ENCODE measurements at regions of chr2 and their contacts with region 1.

Region 1: DNA sequence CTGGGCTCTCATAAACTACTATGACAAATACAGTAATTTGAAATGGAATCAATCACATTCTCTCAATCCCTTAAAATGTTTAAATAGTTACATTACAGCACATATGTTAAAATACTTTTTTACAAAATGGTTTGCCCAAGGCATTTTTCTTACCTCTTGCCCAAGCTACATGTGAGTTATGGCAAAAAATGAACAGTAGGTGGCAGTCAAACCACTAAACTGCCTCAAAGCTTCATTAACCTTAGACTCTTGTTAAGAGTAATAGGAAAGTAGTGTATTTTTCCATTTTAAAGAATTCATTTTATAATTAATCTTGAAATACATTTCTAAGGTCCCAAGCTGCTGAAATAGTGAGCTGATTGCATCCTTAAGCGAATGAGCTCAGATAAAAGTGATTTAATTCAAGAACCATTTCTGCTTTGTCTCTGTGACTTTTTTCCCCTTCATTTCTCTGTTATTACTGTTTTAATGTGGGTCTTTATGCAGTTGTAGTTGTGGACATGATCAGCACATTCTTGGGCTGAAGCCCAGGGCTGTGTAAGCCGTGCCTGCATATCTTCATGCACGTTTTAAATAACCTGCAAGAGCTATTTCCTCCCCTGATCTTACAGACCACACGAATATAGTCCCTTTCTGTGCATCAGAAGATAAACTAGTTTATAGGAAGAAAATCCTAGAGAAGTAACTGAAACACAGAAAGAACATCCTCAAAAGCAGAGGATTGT is 311.8 kb downstream of the LNPK start:
- DNase-seq: no peak

Region 2: DNA sequence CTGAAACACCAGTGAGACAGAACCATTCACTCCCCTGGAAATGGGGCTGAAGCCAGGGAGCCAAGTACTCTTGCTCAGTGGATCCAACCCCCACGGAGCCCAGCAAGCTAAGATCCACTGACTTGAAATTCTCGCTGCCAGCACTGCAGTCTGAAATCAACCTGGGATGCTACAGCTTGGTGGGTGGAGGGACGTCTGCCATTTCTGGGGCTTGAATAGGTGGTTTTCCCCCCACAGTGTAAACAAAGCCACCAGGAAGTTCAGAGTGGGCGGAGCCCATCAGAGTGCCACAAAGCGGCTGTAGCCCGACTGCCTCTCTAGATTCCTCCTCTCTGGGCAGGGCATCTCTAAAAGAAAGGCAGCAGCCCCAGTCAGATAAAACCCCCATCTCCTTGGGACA is 19.0 kb after region 1 on chr2:
- intact Hi-C with region 1: no loop called
- DNase-seq: no peak

Region 3: GRCh38 chr2:175823002-175823706 is 132.9 kb after region 1 on chr2:
- intact Hi-C with region 1: loop called in 1 of 2 experiments (anchors 10 kb)
- DNase-seq: no peak